ENCODE measurements at regions of chr12 and their contacts with region 1.

Region 1: GRCh38 chr12:45532113-45532512 is 197.4 kb upstream of the ARID2 start:
- DNase-seq: no peak
- ATAC-seq: no peak
- H3K4me3 ChIP-seq: no peak overlapping the region
- H3K27ac ChIP-seq: no peak overlapping the region
- H3K4me1 ChIP-seq: no peaks in the 10 kb centered on the region
- CTCF ChIP-seq: no peak
- EP300 ChIP-seq: no peak
- POLR2A ChIP-seq: no peak
- RAD21 ChIP-seq: no peak

Region 2: GRCh38 chr12:45008211-45008610 is 523.9 kb before region 1 on chr12:
- CTCF ChIA-PET with region 1: no interaction called
- POLR2A ChIA-PET with region 1: no interaction called
- DNase-seq: no peak
- ATAC-seq: no peak
- H3K4me3 ChIP-seq: no peak overlapping the region
- H3K27ac ChIP-seq: no peak overlapping the region
- H3K4me1 ChIP-seq: no peaks in the 10 kb centered on the region
- CTCF ChIP-seq: no peak
- EP300 ChIP-seq: no peak
- POLR2A ChIP-seq: no peak
- RAD21 ChIP-seq: no peak

Region 3: DNA sequence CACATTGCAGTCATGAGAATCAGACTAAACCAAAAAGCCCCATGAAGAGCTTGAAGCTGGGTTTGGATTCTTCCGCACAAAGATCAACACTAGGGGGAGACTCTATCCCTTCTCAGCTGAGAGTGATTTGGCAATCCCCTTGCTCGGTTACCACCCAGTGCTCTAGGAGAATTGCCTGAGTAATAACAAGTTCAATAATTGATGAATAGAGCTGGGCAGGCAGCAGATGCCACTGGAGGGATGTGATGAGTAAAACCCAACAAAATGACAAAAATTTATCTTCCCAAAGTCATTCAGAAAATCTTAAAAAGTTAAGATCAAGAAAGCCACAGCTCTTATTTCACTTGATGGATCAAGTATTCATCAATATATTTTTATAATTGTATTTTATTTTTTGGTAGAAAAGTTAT is 11.8 kb after region 1 on chr12:
- CTCF ChIA-PET with region 1: interaction called, 16 read pairs
- POLR2A ChIA-PET with region 1: no interaction called
- DNase-seq: peak; percentile 62 to 78
- ATAC-seq: peak; percentile 78 to 96
- H3K4me3 ChIP-seq: no peak overlapping the region
- H3K27ac ChIP-seq: no peak overlapping the region
- H3K4me1 ChIP-seq: no peaks in the 10 kb centered on the region
- CTCF ChIP-seq: peak; percentile 79
- EP300 ChIP-seq: no peak
- POLR2A ChIP-seq: no peak
- RAD21 ChIP-seq: peak; percentile 75 to 78